HEK293 (cell line): ENCODE measurements at regions of chr6 and their contacts with region 1.

Region 1: GRCh38 chr6:128713461-128713860 is 169.5 kb upstream of the LAMA2 start:
- H3K4me3 ChIP-seq: no peak overlapping the region
- H3K27ac ChIP-seq: no peak overlapping the region
- H3K4me1 ChIP-seq: peaks cover 6% of the 10 kb centered on the region; the same call in 1 of the 2 replicates
- CTCF ChIP-seq: no peak

Region 2: GRCh38 chr6:128725271-128726233 is 12.1 kb after region 1 on chr6:
- CTCF ChIA-PET with region 1: interaction called, 26 read pairs
- POLR2A ChIA-PET with region 1: no interaction called
- H3K4me3 ChIP-seq: no peak overlapping the region
- H3K27ac ChIP-seq: no peak overlapping the region
- H3K4me1 ChIP-seq: no peaks in the 10 kb centered on the region
- CTCF ChIP-seq: peak; percentile 18; the same call in 1 of the 2 replicates